ENCODE measurements at regions of chr7 and their contacts with region 1.

Region 1: GRCh38 chr7:143008007-143008901 is 18.7 kb downstream of the OR9A2 start:
- DNase-seq: peak; percentile 69
- CTCF ChIP-seq: peak; percentile 96

Region 2: GRCh38 chr7:142603870-142604448 is 404.3 kb before region 1 on chr7:
- CTCF ChIA-PET with region 1: interaction called, 38 read pairs
- POLR2A ChIA-PET with region 1: no interaction called
- DNase-seq: peak; percentile 62
- CTCF ChIP-seq: peak; percentile 81

Region 3: DNA sequence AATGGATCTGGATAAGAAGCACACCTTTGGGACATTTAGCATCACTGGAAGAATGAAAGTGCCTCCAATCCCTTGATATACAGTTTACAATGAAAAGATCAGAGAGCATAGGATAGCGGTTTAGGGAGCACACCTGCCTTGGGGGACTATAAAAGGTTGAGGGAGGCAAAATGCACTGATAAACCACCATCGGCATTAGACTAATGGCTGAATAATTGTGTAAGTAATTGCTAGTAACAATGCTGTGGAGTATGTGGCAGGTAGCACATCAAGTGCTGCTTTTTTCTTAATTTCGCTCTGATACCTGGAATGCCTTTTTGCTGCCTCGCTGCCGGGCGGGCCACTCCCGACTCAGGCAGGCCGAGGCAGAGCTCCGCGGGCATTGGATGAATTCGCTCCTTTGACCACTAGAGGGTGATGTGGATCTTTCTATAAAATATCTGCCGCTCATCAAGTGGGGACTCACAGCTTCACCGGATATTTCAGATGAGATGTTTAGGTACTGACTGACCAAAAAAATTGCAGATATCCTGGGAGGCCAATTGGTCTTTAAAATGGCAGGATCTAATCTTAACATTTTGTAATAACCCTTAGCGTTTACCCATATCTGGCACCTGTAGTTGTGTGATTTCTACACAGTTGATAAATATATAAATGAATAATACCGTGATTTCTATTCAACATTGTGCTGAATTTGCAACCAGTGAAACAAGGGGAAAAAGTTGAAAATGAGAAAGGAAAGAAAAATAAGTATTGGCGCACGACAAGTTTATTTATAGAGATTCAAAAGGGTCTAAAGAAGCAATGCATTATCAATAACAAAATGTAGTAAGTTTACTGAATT is 375.7 kb before region 1 on chr7:
- CTCF ChIA-PET with region 1: interaction called, 43 read pairs
- POLR2A ChIA-PET with region 1: no interaction called
- DNase-seq: peak; percentile 79
- CTCF ChIP-seq: peak; percentile 79

Region 4: DNA sequence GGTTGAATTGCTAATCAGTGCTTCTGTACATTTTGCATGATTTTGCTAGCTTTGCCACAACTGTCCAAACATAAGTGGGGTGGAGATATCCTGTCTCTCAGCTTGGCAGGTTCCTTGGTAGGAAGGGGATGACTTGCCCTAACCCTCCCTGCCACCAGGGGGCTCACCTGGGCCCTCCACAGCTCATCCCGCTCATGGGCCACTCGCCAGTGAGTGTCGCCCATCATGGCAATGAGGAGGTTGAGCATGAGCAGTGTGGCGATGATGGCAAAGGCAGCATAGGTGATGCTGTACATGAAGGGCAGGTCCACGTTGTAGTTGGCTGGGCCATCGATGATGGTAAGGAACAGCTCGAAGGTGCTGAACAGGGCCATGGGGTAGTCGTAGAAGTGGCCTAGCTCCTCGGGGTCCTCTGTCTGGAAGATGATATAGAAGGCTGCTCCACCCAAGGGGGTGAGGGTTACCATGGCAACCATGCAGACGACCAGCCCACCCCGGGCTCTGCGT is 134.9 kb before region 1 on chr7:
- CTCF ChIA-PET with region 1: interaction called, 25 read pairs
- POLR2A ChIA-PET with region 1: no interaction called
- DNase-seq: peak; percentile 59
- CTCF ChIP-seq: peak; percentile 46

Region 5: GRCh38 chr7:142880876-142881505 is 127.3 kb before region 1 on chr7:
- CTCF ChIA-PET with region 1: interaction called, 18 read pairs
- POLR2A ChIA-PET with region 1: no interaction called
- DNase-seq: peak; percentile 72
- CTCF ChIP-seq: peak; percentile 73

Region 6: GRCh38 chr7:142992464-142992863 is 15.8 kb before region 1 on chr7:
- CTCF ChIA-PET with region 1: interaction called, 30 read pairs
- POLR2A ChIA-PET with region 1: no interaction called
- DNase-seq: no peak
- CTCF ChIP-seq: no peak

Region 7: GRCh38 chr7:142997456-142997989 is 10.7 kb before region 1 on chr7:
- CTCF ChIA-PET with region 1: interaction called, 30 read pairs
- POLR2A ChIA-PET with region 1: no interaction called
- DNase-seq: no peak
- CTCF ChIP-seq: no peak

Measured in GM10248 (cell line).